ENCODE measurements at regions of chr17 and their contacts with region 1.

Region 1: DNA sequence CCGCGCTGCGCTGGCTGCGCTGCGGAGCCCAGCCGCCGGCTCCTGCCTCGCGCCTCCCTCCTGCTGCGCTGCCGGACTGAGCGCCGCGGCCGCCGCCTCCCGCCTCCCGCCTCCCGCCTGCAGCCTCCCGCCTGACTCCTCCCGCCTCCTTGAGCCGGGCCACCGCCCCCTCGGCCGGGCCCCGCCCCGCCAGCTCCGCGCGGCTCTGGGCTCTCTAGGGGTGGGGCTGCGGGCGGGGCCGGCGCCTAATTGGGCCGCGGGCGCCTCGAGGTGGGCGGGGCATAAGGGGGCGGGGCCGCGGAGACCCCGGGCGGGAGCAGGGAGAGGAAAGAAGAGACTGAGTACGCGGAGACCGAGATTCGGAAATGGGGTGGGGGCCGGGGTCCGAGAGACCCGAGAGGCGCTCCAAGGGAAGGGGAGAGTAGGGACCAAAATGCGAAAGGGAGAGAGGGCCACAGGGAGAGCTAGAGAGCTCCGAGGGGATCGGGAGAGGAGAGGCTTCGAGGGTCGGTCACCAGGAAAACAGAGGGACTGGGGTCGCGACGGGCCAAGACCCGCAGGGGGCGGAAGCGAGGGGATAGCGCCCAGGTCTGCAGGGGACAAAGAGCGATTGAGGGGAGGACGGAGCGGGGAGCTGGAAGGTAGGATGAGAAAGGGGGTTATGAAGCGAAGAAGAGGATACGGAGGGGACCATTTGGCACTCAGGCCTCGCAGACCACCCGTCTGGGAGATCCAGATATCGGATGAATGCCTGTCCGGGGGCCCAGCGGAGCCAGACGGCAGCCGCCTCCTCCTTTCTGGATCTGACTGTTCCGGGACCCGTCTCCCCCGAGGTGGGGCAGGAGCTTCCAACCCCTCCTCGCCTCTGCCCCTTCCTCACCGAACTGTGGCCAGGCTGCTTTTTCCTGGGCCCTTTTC is at the start of gene C1QL1:
- DNase-seq: peak; percentile 82
- ATAC-seq: peak; percentile 98
- H3K4me3 Mint-ChIP-seq: peak within 1 kb of the TSS; percentile 78
- H3K27ac Mint-ChIP-seq: no peak within 1 kb of the TSS
- H3K4me1 Mint-ChIP-seq: peaks cover 37% of the 10 kb centered on the region
- H3K27me3 Mint-ChIP-seq: peaks cover 44% of the 10 kb centered on the region
- CTCF ChIP-seq: no peak
- total RNA-seq, gene C1QL1: not detected in 2 replicates

Region 2: DNA sequence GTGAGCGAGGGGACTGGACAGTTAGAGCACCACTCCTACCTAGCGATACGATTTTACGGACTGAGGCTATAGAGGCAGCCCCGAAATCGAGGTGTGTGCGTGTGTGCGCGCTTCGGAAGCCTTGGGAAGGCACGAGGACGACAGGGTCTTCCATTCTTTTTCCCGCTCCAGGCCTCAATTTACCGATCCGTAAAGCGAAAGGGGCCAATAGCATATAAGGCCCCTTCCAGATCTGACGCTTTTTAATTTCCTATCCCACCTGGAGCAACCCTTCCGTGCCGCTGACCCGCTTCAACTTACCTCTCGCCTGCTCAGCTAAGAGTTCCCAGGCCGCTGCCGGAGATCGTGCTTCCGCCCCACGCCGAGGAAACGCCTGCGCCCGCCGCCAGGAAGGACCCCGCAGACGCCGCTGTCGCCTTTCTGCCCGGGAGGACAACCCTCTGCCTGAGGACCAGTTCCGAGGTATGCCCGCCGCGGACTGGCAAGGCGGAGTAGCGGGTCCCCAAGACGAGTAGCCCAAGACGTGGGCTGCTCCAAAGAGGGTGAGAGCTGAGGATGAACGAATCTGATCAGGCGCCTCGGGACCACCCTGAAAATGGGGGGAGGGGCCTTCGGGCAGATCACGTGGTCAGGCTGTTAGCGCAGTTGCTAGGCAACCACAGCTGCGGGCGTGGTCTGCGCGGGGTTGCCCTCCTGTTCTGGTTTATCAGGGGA is 69.3 kb before region 1 on chr17 and contains the start of gene EFTUD2:
- CTCF ChIA-PET with region 1: no interaction called
- POLR2A ChIA-PET with region 1: no interaction called
- intact Hi-C with region 1: loop called (anchors 2 kb)
- DNase-seq: peak; percentile 94
- ATAC-seq: peak; percentile 93
- H3K4me3 Mint-ChIP-seq: peak within 1 kb of the TSS; percentile 96
- H3K27ac Mint-ChIP-seq: peak within 1 kb of the TSS; percentile 99
- H3K4me1 Mint-ChIP-seq: peaks cover 31% of the 10 kb centered on the region
- H3K27me3 Mint-ChIP-seq: peaks cover 4% of the 10 kb centered on the region
- CTCF ChIP-seq: no peak
- total RNA-seq, gene EFTUD2: 168 and 192 TPM in 2 replicates

Region 3: DNA sequence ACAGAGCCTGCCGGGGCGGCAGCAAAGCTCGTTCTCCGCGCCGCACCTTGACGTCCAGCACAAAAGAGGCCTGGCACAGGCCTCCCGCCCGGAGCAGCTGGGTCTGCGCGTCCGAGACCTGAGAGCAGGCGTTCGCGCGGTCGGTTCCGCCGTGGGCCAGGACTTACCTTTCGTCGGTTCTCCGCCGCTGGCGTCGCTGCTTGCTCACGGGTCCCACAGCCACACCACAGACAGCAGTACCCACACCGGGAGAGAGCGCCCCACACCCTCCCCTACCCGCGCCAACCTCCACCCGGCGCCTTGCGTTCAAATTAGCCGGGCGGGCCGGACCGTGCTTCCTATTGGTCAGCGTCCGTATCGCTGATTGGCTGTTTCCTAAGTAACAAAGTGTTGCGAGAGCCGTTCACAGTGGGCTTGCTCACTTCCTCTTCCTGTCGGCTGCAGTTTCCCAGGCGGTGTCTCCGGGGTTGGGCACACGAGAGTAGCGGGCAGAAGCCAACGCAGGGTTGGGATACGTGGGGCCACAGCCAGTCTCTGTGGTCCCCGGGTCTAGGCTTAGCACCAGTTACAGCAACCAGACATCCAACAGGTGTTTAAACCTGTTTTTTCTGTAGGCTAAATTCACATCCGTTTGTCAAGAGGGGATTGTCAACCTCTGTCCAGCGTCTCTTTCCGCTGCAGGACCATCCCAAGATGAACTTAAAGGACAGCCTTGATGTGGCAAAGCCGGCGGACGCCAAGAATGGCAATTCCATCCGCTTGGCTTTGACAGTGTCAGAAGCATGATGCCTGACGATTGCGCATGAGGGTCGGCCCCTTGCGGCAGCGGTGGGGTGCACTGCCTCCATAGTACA is 20.8 kb before region 1 on chr17 and contains the start of gene KIF18B:
- CTCF ChIA-PET with region 1: no interaction called
- POLR2A ChIA-PET with region 1: interaction called, 3 read pairs
- intact Hi-C with region 1: loop called (anchors 1 kb)
- DNase-seq: peak; percentile 77
- ATAC-seq: peak; percentile 99
- H3K4me3 Mint-ChIP-seq: peak within 1 kb of the TSS; percentile 91
- H3K27ac Mint-ChIP-seq: peak within 1 kb of the TSS; percentile 86
- H3K4me1 Mint-ChIP-seq: peaks cover 14% of the 10 kb centered on the region
- H3K27me3 Mint-ChIP-seq: peaks cover 4% of the 10 kb centered on the region
- CTCF ChIP-seq: no peak
- total RNA-seq, gene KIF18B: 0.49 and 1.7 TPM in 2 replicates

Region 4: GRCh38 chr17:45021607-45022287 is 53.3 kb after region 1 on chr17:
- CTCF ChIA-PET with region 1: no interaction called
- POLR2A ChIA-PET with region 1: no interaction called
- intact Hi-C with region 1: loop called (anchors 5 kb)
- DNase-seq: peak; percentile 65
- ATAC-seq: peak; percentile 86
- H3K4me3 Mint-ChIP-seq: peak overlapping the region; percentile 39
- H3K27ac Mint-ChIP-seq: no peak overlapping the region
- H3K4me1 Mint-ChIP-seq: peaks cover 32% of the 10 kb centered on the region
- H3K27me3 Mint-ChIP-seq: peaks cover 37% of the 10 kb centered on the region
- CTCF ChIP-seq: no peak

Measured in activated B cell treated with CpG ODN at 0.5 μM for 24 hours (primary cell).